Activated CD8-positive, alpha-beta T cell treated with anti-CD3 and anti-CD28 coated beads for 36 hours (primary cell): ENCODE measurements at regions of chr4 and their contacts with region 1.

Region 1: DNA sequence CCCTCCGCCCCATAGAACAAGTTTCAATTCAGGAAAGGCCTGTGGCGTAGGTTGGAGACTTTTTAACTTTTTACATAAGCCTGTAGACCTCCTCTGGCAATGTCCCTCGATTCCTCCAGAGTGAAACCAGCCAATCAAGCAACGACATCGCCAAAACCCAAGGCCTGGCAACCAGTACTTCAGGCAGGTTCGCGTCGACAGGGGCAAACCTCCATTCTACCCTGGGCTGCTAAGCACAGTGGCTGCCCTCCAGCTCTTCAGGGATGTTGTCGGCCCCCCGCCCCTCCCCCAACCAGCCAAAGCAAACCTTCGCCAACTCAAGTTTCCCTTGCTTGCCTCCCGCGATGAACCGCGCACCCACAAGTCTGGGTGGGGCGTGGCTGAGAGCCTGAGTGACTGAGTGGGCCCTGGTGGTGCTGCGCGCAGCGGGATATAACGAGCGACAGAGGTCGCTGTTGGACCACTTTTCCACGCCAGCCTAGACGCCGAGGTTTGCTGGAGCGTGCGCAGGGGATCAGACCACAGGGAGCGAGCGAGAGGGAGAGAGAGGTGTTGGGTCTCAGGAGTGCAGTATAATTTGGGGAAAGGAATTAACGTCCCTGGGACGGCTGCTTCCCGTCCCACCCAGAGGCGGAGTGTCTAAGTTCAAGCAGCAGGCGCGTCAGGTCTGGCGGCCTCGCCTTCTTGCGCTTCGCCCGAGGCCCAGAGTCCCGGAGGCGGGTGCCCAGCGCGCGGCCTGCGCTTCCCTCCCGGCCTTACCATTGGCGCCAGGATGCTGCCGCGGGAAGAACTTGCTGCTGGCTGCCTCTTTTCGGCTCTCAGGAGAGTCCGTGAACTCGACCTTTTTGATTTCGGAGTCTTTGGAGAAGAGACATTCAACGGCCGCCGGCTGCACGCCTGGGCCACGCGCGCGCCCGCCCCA is 9.0 kb upstream of the PITX2 start:
- DNase-seq: peak; percentile 71
- ATAC-seq: peak; percentile 90
- H3K4me3 Mint-ChIP-seq: peak overlapping the region; percentile 57
- H3K27ac Mint-ChIP-seq: no peak overlapping the region
- H3K4me1 Mint-ChIP-seq: peaks cover 12% of the 10 kb centered on the region
- H3K27me3 Mint-ChIP-seq: peaks cover 79% of the 10 kb centered on the region
- CTCF ChIP-seq: peak; percentile 61

Region 2: DNA sequence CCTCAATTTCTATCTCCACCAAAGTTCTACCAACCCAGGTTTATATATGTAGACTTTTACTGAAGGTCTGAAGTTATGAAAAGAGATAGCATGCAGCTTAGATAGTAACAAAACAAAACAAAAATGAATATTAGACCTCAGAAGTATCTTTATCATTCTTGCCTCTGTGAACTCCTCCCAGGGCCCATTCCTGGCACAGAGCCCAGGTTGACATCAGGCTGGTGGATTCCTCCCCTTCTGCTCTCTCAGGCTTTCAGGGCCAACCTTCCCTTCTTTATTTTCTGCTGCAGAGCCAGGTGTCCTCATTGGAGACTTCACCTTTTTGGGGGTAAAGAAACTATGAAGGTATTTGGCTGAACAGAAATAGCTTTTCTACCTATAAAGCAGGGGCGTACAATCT is 103.8 kb after region 1 on chr4:
- CTCF ChIA-PET with region 1: no interaction called
- POLR2A ChIA-PET with region 1: no interaction called
- intact Hi-C with region 1: no loop called
- DNase-seq: no peak
- ATAC-seq: no peak
- H3K4me3 Mint-ChIP-seq: no peak overlapping the region
- H3K27ac Mint-ChIP-seq: no peak overlapping the region
- H3K4me1 Mint-ChIP-seq: no peaks in the 10 kb centered on the region
- H3K27me3 Mint-ChIP-seq: no peaks in the 10 kb centered on the region
- CTCF ChIP-seq: no peak

Region 3: DNA sequence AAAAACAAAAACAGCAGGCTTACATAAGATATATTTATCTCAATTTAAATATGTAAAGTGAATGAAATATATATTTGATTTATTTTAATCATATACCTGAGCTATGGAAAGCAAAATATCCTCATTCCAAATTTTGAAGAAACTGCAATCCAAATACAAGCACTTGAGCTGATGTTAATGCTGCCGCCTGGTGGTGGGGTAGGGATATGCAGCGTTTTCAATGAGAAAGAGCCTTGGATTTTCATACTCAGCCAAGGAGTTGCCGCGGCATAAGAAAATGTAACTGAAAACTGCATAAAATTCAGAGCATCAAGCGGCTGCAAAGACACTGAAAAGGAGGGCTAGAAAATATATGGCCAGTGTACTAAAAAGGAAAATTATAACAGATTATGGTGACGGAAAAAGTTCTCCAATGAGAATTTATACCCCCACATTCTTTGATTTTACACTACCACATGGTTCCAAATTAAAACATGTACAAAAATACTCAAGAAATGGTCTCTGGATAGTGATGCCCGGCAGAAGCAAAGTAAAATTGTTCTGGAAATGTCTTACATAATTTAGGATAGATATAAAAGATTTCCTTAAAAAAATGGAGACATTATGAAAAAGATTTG is 651.3 kb after region 1 on chr4:
- CTCF ChIA-PET with region 1: no interaction called
- POLR2A ChIA-PET with region 1: no interaction called
- intact Hi-C with region 1: loop called (anchors 5 kb)
- DNase-seq: peak; percentile 65
- ATAC-seq: peak; percentile 51
- H3K4me3 Mint-ChIP-seq: no peak overlapping the region
- H3K27ac Mint-ChIP-seq: no peak overlapping the region
- H3K4me1 Mint-ChIP-seq: no peaks in the 10 kb centered on the region
- H3K27me3 Mint-ChIP-seq: peaks cover 1% of the 10 kb centered on the region
- CTCF ChIP-seq: peak; percentile 75

Region 4: DNA sequence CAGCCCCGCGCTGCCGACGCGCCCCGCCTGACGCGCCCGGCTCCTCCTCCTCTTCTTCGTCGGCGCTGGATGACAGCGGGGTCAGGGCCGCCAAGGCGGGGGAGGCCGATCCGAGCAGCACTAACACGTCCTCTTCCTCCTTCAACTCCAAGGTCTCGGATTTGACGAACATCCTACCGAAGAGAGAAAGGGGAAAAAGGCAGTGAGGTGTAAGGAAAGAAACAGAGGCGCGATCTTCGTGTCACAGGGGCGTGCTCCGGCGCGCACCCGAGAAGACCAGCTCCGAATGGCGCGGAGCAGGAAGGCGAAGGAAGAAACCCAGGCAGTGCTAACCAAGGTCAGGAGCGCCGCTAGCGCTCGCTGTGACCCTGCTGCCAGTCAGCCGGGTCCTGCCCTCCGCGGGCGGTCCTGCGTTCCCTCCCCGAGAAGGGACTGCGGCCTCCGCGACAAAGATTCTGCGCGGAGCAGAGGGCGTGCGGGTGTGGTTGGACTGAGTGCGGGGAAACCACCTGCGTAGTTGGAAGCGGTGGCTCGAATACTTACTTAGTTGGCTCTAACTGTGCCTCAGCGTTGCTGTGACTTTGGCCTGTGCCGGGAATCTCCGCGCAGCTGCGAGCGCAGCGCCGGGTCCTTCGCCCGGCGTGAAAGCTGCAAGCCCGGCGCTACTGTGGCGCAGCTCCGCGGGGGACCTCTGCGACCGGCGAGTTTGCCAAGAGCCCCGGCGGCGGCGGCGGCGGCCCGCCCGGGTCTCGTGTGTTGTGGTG is 1883.6 kb after region 1 on chr4:
- CTCF ChIA-PET with region 1: no interaction called
- POLR2A ChIA-PET with region 1: no interaction called
- intact Hi-C with region 1: loop called (anchors 10 kb)
- DNase-seq: peak; percentile 68
- ATAC-seq: peak; percentile 75
- H3K4me3 Mint-ChIP-seq: peak overlapping the region; percentile 96
- H3K27ac Mint-ChIP-seq: peak overlapping the region; percentile 62
- H3K4me1 Mint-ChIP-seq: peaks cover 46% of the 10 kb centered on the region
- H3K27me3 Mint-ChIP-seq: peaks cover 83% of the 10 kb centered on the region
- CTCF ChIP-seq: no peak